Activated naive CD4-positive, alpha-beta T cell treated with anti-CD3 and anti-CD28 coated beads for 36 hours (primary cell): ENCODE measurements at regions of chrX and their contacts with region 1.

Region 1: DNA sequence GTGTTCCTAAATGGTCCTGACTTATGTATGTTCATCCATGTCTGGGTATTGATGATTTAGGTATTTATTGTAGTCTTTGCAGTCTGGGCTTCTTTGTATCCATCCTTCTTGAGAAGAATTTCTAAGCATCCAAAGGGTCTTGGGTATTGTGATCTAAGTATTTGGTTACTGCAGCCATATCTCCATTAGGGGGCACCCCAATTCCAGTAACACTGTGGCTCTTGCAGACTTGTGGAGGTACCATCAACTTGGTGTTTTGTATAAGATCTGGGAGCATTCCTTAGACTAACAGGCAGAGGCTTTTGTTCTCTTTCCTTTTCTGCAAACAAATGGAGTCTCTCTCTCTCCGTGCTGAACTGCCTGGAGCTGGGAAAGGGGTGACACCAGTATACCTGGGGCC is 113.7 kb upstream of the NEXMIF start:
- DNase-seq: peak; percentile 29
- H3K4me3 Mint-ChIP-seq: no peak overlapping the region
- H3K27ac Mint-ChIP-seq: no peak overlapping the region
- H3K4me1 Mint-ChIP-seq: no peaks in the 10 kb centered on the region
- H3K27me3 Mint-ChIP-seq: no peaks in the 10 kb centered on the region

Region 2: GRCh38 chrX:75603833-75604232 is 564.9 kb after region 1 on chrX:
- CTCF ChIA-PET with region 1: no interaction called
- intact Hi-C with region 1: loop called (anchors 2 kb)
- DNase-seq: no peak
- H3K4me3 Mint-ChIP-seq: no peak overlapping the region
- H3K27ac Mint-ChIP-seq: no peak overlapping the region
- H3K4me1 Mint-ChIP-seq: no peaks in the 10 kb centered on the region
- H3K27me3 Mint-ChIP-seq: no peaks in the 10 kb centered on the region

Region 3: DNA sequence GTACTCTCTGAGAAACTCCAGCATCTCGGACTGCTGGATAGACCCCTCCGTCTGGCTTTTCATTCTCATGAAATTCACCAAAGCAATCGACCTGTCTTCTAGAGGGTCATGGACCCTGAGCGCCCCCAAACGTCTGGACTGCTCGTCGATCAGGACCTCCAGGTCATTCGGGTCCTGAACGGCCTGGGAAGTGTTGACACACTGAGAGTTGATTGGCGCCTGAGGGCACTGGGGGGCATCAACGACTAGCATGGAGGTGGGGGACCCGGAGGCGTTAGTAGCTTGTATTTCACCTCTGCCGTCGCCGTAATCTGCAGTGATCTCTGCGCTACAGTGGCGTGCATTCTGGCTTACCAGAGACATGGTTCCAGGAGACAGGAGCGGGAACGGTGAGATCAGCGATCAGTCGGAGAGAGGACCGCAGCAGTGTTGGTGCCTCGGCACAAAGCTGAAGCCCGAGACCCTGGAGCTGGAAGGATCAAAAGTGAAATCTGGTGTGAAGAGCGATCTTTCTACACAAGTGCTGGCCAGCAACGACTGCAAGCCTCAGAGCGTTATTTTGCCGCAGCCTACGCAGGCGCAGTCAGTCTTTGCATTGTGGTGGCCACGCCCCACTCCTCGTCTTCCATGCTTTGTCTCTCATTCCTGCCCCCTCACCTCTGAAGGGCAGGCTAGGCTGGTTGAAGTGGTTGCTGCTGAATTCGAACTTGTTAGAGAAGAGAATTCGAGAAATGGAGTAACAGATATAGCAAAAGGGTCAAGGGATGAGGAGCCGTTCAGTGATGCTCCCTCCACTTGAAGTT is 746.0 kb after region 1 on chrX and contains the start of gene MAGEE2:
- CTCF ChIA-PET with region 1: no interaction called
- intact Hi-C with region 1: no loop called
- DNase-seq: peak; percentile 47
- H3K4me3 Mint-ChIP-seq: peak within 1 kb of the TSS; percentile 79
- H3K27ac Mint-ChIP-seq: no peak within 1 kb of the TSS
- H3K4me1 Mint-ChIP-seq: peaks cover 3% of the 10 kb centered on the region
- H3K27me3 Mint-ChIP-seq: peaks cover 4% of the 10 kb centered on the region
- total RNA-seq, gene MAGEE2: not detected